AG04449 (cell line): ENCODE measurements at regions of chr12 and their contacts with region 1.

Region 1: GRCh38 chr12:101323255-101323654 is 43.4 kb downstream of the UTP20 start:
- DNase-seq: no peak
- H3K4me3 ChIP-seq: no peak overlapping the region
- CTCF ChIP-seq: no peak

Region 2: DNA sequence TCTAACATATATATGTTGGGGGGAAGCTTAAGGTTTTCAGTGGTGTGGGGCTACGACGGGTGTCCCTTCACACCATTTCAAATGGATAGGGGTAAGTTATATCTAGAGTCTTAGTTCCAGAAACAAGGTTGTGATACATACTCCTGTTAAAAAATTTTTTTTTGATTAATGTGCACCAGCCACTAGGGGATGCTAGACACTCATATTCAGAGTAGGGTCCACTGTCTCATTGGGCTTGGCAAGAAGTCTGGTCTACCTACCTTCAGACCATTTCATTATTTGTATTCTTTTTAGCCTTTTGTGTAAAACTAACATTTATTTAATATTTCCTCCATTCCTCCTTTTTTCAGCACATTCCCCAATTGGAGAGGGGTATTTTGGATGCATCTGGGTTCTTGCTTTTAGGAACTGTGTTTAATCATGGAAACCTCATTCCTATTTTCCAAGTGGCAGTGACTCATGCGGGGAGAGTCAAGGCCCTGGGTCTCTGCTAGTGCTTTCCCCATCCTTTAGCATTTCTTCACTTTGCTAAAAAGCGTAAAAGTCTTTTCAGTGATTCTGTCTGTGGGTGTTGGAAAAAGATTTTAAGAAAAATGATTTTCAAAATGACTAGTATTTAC is 495.2 kb before region 1 on chr12:
- CTCF ChIA-PET with region 1: interaction called, 23 read pairs
- POLR2A ChIA-PET with region 1: no interaction called
- DNase-seq: no peak
- H3K4me3 ChIP-seq: no peak overlapping the region
- CTCF ChIP-seq: peak; percentile 10

Region 3: GRCh38 chr12:101305794-101306193 is 17.5 kb before region 1 on chr12:
- CTCF ChIA-PET with region 1: no interaction called
- POLR2A ChIA-PET with region 1: no interaction called
- DNase-seq: no peak
- H3K4me3 ChIP-seq: no peak overlapping the region
- CTCF ChIP-seq: no peak

Region 4: GRCh38 chr12:101336437-101336836 is 13.2 kb after region 1 on chr12:
- CTCF ChIA-PET with region 1: interaction called, 22 read pairs
- POLR2A ChIA-PET with region 1: no interaction called
- DNase-seq: no peak
- H3K4me3 ChIP-seq: no peak overlapping the region
- CTCF ChIP-seq: no peak

Region 5: GRCh38 chr12:101424620-101425019 is 101.4 kb after region 1 on chr12:
- CTCF ChIA-PET with region 1: no interaction called
- POLR2A ChIA-PET with region 1: no interaction called
- DNase-seq: no peak
- H3K4me3 ChIP-seq: no peak overlapping the region
- CTCF ChIP-seq: no peak